Endothelial cell of umbilical vein (primary cell): ENCODE measurements at regions of chr15 and their contacts with region 1.

Region 1: GRCh38 chr15:64809649-64810496 is 15.6 kb downstream of the PIF1 start:
- DNase-seq: peak; percentile 67
- H3K4me3 ChIP-seq: no peak overlapping the region
- H3K27ac ChIP-seq: no peak overlapping the region
- H3K4me1 ChIP-seq: no peaks in the 10 kb centered on the region
- H3K27me3 ChIP-seq: peaks cover 0 to 6% of the 10 kb centered on the region in 2 experiments
- CTCF ChIP-seq: peak; percentile 94 to 97
- POLR2A ChIP-seq: no peak

Region 2: DNA sequence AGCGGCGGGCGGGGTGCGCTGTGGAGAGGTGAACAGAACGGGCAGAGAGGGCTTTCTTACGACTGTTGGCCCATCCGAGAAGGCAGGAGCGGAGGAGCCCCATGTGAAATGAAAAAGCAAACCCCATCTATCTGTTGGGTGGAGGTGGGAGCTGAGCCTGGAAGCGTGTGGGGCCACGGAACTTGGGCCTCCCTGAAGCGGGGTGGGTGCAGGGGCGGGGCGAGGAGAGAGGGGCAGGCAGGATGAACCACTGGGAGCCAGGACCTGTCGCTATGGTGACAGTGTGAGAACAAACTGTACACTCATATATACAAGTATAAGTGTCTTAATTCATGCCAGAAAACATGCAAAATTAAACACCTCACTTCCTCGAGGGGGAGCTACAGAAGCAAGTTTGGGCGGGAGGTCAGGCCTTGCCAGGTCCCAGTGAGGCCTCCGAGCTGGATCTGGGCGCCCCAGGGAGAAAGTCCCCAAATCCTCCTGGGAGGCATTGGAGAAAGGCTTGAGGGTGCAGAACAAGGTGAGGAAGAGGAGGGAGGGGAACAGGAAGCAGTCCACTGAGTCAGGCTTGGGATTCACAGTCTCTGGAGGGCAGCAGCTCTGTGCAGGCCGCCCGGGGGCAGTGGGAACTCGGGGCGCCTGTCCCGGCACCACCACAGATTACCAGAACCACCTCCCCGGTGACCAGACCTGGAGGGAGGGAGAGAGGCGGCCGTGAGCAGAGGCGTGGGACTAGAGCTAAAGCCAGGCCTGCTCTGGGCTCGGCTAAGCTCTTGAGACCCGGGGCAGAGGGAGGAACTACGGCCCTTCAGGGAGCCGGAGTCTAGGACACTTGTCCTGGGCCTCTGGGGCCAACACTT is 69.3 kb before region 1 on chr15:
- CTCF ChIA-PET with region 1: interaction called, 222 read pairs
- POLR2A ChIA-PET with region 1: no interaction called
- dilution Hi-C with region 1: no loop called
- intact Hi-C with region 1: no loop called
- DNase-seq: no peak
- H3K4me3 ChIP-seq: no peak overlapping the region
- H3K27ac ChIP-seq: no peak overlapping the region
- H3K4me1 ChIP-seq: no peaks in the 10 kb centered on the region
- H3K27me3 ChIP-seq: no peaks in the 10 kb centered on the region
- CTCF ChIP-seq: no peak
- POLR2A ChIP-seq: no peak

Region 3: DNA sequence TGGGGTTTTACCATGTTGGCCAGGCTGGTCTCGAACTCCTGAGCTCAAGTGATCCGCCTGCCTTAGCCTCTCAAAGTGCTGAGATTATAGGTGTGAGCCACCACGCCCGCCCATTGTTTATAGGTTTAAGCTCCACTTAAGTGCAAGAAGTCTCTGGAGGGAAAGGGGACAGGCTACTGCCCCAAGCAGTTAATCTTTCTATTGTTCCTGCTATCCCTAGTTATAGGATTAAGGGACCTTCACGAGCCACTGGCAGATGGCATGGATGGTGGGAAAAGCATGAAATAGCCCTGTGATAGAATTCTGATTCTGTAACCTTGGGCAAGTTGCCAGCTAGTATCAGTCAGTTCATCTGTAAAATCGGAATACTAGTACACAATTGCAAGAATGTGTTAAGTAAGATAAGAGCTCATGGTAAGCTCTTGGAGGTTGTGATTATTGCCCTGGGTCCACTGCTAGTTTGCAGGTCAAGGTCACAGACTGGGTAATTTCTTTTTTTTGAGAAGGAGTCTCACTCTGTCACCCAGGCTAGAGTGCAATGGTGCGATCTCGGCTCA is 29.2 kb before region 1 on chr15:
- CTCF ChIA-PET with region 1: interaction called, 40 read pairs
- POLR2A ChIA-PET with region 1: no interaction called
- dilution Hi-C with region 1: no loop called
- intact Hi-C with region 1: no loop called
- DNase-seq: no peak
- H3K4me3 ChIP-seq: no peak overlapping the region
- H3K27ac ChIP-seq: no peak overlapping the region
- H3K4me1 ChIP-seq: peaks cover 6% of the 10 kb centered on the region
- H3K27me3 ChIP-seq: peaks cover 0 to 4% of the 10 kb centered on the region in 2 experiments
- CTCF ChIP-seq: no peak
- POLR2A ChIP-seq: no peak

Region 4: DNA sequence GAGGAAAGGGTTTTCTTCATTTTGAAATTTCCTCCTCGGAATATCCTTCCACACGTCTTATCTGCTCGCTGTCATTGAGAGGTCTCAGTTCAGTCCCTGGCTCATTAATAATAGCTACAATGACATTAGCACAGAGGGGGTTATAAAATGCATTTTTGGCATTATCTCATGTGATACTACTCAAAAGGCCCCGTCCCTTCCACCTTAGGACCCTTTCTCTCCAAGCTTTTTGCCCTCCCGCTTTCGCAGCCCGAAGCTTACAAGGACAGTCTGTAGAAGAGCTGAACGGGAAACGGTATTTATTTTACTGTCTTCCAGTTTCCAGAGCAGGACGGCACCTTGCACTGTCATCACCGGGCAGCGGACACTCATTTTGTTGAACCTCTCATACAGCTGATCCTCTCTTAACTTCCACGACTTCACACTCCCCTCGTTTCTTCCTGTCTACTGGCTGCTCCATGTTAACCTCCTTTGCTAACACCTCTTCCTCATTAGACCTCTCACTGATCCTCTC is 26.2 kb after region 1 on chr15:
- CTCF ChIA-PET with region 1: interaction called, 12 read pairs
- POLR2A ChIA-PET with region 1: no interaction called
- dilution Hi-C with region 1: no loop called
- intact Hi-C with region 1: no loop called
- DNase-seq: no peak
- H3K4me3 ChIP-seq: no peak overlapping the region
- H3K27ac ChIP-seq: no peak overlapping the region
- H3K4me1 ChIP-seq: peaks cover 10% of the 10 kb centered on the region
- H3K27me3 ChIP-seq: no peaks in the 10 kb centered on the region
- CTCF ChIP-seq: no peak
- POLR2A ChIP-seq: no peak

Region 5: GRCh38 chr15:64851503-64851840 is 41.6 kb after region 1 on chr15:
- CTCF ChIA-PET with region 1: no interaction called
- POLR2A ChIA-PET with region 1: no interaction called
- dilution Hi-C with region 1: no loop called
- intact Hi-C with region 1: no loop called
- DNase-seq: no peak
- H3K4me3 ChIP-seq: no peak overlapping the region
- H3K27ac ChIP-seq: no peak overlapping the region
- H3K4me1 ChIP-seq: peaks cover 10% of the 10 kb centered on the region
- H3K27me3 ChIP-seq: no peaks in the 10 kb centered on the region
- CTCF ChIP-seq: no peak
- POLR2A ChIP-seq: no peak